GM10248 (cell line): ENCODE measurements at regions of chr9 and their contacts with region 1.

Region 1: GRCh38 chr9:35923927-35924763 is 14.9 kb downstream of the SPAAR start:
- DNase-seq: no peak
- CTCF ChIP-seq: no peak

Region 2: DNA sequence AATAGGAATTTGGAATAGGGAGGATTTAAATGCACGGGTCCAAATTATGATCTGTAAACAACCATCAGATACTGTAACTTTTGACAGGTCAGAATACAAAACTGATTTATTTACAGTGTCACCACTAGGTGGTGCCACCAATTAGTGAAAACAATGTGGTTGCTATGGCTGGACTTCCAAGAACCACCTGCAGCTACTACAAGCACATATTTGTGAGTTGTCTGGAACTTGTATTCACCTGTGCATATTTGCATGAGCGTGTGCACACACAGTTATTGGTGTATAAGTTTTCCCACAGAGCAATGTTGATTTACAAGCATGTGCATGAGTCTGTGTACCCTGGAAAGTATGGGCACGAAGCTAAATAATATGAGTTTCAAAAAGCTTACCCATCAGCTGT is 21.1 kb before region 1 on chr9:
- CTCF ChIA-PET with region 1: interaction called, 10 read pairs
- POLR2A ChIA-PET with region 1: no interaction called
- DNase-seq: peak; percentile 74
- CTCF ChIP-seq: peak; percentile 74

Region 3: GRCh38 chr9:35954942-35955546 is 30.9 kb after region 1 on chr9:
- CTCF ChIA-PET with region 1: interaction called, 11 read pairs
- POLR2A ChIA-PET with region 1: no interaction called
- DNase-seq: peak; percentile 71
- CTCF ChIP-seq: peak; percentile 80